ENCODE measurements at regions of chr19 and their contacts with region 1.

Region 1: DNA sequence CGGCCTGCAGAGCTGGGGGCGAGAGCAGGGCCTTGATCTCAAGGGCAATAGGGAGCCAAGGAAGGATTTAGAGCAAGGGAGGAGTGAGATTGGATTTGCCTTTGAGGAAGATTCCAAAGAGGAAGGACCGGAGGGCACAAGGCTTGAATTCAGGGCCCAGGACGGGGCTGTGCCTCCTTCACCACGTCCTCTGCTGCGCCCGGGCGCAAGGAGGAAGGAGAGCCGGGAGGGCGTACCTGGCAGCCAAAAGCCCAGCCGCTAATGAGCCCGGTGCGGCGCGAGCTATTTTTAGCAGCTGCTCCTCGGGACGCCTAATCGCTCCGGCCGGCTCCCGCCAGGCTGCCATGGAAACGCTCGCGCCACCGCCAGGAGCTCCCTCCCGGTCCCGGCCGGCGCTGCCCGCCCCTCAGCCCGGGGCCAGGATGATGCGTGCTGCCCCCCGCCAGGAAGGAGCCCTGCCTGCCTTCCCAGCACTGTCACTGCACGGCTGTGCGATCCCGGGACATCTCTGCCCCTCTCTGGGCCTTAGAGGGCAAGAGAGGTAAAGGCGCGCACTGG is 31.3 kb downstream of the TINCR start:
- DNase-seq: peak; percentile 57
- H3K4me3 ChIP-seq: peak overlapping the region in 1 of 3 experiments; percentile 28
- H3K27ac ChIP-seq: peak overlapping the region; percentile 76
- H3K4me1 ChIP-seq: peaks cover 17% of the 10 kb centered on the region
- H3K27me3 ChIP-seq: no peaks in the 10 kb centered on the region
- CTCF ChIP-seq: no peak

Region 2: DNA sequence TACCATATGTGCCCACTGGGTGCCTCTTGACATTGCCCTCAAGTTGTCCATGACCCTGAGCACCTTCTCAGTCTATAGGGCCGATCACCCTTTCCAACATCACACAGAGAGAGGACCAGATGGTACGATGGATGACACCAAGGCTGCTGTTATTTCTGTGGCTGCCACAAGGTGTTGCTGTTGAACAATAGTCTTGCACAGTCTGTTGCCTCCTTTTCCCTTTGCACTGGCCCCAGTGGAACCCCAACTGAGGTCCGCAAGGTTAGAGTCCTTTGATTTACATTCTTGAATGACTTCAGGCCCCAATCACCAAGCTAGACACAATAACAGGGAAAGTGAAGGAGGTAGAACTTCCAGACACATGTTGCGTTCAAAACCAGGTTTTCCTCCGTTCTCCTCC is 20.7 kb before region 1 on chr19:
- CTCF ChIA-PET with region 1: interaction called, 15 read pairs
- dilution Hi-C with region 1: no loop called
- in situ Hi-C with region 1: no loop called
- intact Hi-C with region 1: no loop called
- DNase-seq: no peak
- H3K4me3 ChIP-seq: no peak overlapping the region
- H3K27ac ChIP-seq: no peak overlapping the region
- H3K4me1 ChIP-seq: no peaks in the 10 kb centered on the region
- H3K27me3 ChIP-seq: no peaks in the 10 kb centered on the region
- CTCF ChIP-seq: peak in 1 of 2 donors; percentile 28

Region 3: DNA sequence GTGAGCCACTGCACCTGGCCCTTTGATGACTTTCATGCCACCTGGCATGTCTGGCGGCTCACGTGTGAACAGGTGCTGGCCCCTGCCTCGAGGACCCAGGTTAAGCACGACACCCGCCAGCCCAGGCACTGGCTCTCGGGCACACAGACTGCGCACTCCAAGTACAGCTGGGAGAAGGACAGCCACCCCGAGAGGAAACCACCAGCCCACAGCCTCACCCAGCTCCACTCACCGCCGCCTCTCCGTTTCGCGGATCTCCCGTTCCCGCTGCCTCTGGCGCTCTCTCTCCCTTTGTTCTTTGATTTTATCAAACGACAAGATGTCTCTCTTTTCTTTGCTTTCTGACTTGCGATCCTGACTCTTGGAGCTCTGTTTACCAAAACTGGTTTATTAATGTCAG is 58.7 kb after region 1 on chr19:
- CTCF ChIA-PET with region 1: no interaction called
- dilution Hi-C with region 1: no loop called
- in situ Hi-C with region 1: no loop called
- intact Hi-C with region 1: no loop called
- DNase-seq: no peak
- H3K4me3 ChIP-seq: no peak overlapping the region
- H3K27ac ChIP-seq: no peak overlapping the region
- H3K4me1 ChIP-seq: no peaks in the 10 kb centered on the region
- H3K27me3 ChIP-seq: no peaks in the 10 kb centered on the region
- CTCF ChIP-seq: no peak

Region 4: GRCh38 chr19:5628461-5628860 is 92.0 kb after region 1 on chr19:
- CTCF ChIA-PET with region 1: no interaction called
- dilution Hi-C with region 1: no loop called
- in situ Hi-C with region 1: no loop called
- intact Hi-C with region 1: no loop called
- DNase-seq: no peak
- H3K4me3 ChIP-seq: no peak overlapping the region
- H3K27ac ChIP-seq: no peak overlapping the region
- H3K4me1 ChIP-seq: peaks cover 17% of the 10 kb centered on the region
- H3K27me3 ChIP-seq: no peaks in the 10 kb centered on the region
- CTCF ChIP-seq: no peak

Measured in mammary epithelial cell (primary cell).